Caco-2 (cell line): ENCODE measurements at regions of chr4 and their contacts with region 1.

Region 1: GRCh38 chr4:110472583-110473329 is 3.2 kb upstream of the ENPEP start:
- DNase-seq: peak in 1 of 2 experiments; percentile 51
- H3K4me3 ChIP-seq: no peak overlapping the region
- H3K4me3 Mint-ChIP-seq: no peak overlapping the region
- H3K27ac Mint-ChIP-seq: peak overlapping the region; percentile 70
- H3K4me1 ChIP-seq: peaks cover 19% of the 10 kb centered on the region
- H3K4me1 Mint-ChIP-seq: no peaks in the 10 kb centered on the region
- H3K27me3 ChIP-seq: no peaks in the 10 kb centered on the region
- H3K27me3 Mint-ChIP-seq: peaks cover 2% of the 10 kb centered on the region
- CTCF ChIP-seq: no peak

Region 2: GRCh38 chr4:110458494-110459266 is 14.1 kb before region 1 on chr4:
- CTCF ChIA-PET with region 1: no interaction called
- POLR2A ChIA-PET with region 1: no interaction called
- intact Hi-C with region 1: loop called (anchors 2 kb)
- DNase-seq: no peak
- H3K4me3 ChIP-seq: no peak overlapping the region
- H3K4me3 Mint-ChIP-seq: peak overlapping the region; percentile 34
- H3K27ac Mint-ChIP-seq: peak overlapping the region; percentile 88
- H3K4me1 ChIP-seq: peaks cover 16% of the 10 kb centered on the region; the same call in 1 of the 2 replicates
- H3K4me1 Mint-ChIP-seq: peaks cover 17% of the 10 kb centered on the region
- H3K27me3 ChIP-seq: no peaks in the 10 kb centered on the region
- H3K27me3 Mint-ChIP-seq: no peaks in the 10 kb centered on the region
- CTCF ChIP-seq: no peak

Region 3: DNA sequence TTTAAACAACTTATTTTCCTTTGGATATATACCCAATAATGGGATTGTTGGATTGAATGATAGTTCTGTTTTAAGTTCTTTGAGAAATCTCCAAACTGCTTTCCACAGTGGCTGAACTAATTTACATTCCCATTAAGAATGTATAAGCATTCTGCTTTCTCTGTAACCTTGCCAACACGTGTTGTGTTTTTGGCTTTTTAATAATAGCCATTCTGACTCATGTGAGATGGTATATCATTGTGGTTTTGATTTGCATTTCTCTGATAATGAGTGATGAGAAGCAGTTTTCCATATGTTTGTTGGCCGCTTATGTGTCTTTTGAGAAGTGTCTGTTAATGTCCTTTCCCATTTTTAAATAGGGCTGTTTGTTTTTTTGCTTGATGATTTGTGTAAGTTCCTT is 305.8 kb after region 1 on chr4:
- CTCF ChIA-PET with region 1: no interaction called
- POLR2A ChIA-PET with region 1: no interaction called
- intact Hi-C with region 1: no loop called
- DNase-seq: no peak
- H3K4me3 ChIP-seq: no peak overlapping the region
- H3K4me3 Mint-ChIP-seq: no peak overlapping the region
- H3K27ac Mint-ChIP-seq: no peak overlapping the region
- H3K4me1 ChIP-seq: peaks cover 10% of the 10 kb centered on the region; the same call in 1 of the 2 replicates
- H3K4me1 Mint-ChIP-seq: peaks cover 10% of the 10 kb centered on the region
- H3K27me3 ChIP-seq: no peaks in the 10 kb centered on the region
- H3K27me3 Mint-ChIP-seq: no peaks in the 10 kb centered on the region
- CTCF ChIP-seq: no peak